Left lung (tissue), 14 donors: ENCODE measurements at regions of chr1 and their contacts with region 1.

Region 1: DNA sequence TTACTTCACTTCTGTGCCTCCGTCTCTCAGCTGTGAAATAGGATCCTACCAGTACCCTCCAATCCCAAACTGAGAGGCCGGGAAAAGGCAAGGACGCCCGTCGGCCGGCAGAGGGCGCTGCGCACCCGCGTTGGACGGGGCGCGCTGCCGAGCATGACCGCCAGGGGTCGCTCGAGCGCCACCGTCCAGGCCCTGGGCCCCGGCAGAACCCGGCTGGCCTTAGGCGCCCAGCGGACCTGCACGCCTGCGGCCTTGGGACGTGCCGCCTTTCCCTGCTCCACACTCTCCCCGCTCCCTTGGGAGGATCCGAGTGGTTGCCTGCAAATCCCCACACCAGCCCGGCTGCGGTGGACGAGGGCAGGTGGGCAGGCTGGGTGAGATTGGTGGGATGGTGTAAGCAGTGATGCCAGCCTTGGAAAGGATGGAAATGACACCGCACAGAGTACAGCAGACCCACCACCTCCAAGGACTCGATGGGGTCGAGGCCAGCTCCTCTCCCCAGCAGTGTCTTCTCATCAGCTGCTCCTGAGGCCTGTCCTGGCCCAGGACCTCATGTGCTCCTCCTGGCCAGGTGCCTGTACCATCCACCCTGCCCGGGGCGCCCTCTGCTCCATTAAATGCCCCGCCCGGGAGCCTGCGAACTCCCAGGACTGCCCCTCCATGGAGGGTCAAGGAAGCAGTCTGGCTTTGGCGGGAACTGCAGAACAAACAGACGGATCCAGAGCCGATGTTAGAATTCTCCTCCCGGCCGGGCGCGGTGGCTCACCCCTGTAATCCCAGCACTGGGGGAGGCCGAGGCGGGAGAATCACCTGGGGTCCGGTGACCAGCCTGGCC is 47.4 kb upstream of the LBR start:
- DNase-seq: peak; percentile 70 to 97 (median 82)
- ATAC-seq: peak; percentile 100
- H3K4me3 ChIP-seq: no peak overlapping the region
- H3K27ac ChIP-seq: no peak overlapping the region
- H3K4me1 ChIP-seq: peaks cover 0 to 10% of the 10 kb centered on the region in 2 donors
- H3K27me3 ChIP-seq: no peaks in the 10 kb centered on the region
- CTCF ChIP-seq: peak; percentile 100

Region 2: GRCh38 chr1:225406976-225407725 is 68.1 kb before region 1 on chr1:
- intact Hi-C with region 1: no loop called
- DNase-seq: no peak
- ATAC-seq: no peak
- H3K4me3 ChIP-seq: no peak overlapping the region
- H3K27ac ChIP-seq: no peak overlapping the region
- H3K4me1 ChIP-seq: no peaks in the 10 kb centered on the region
- H3K27me3 ChIP-seq: no peaks in the 10 kb centered on the region
- CTCF ChIP-seq: no peak

Region 3: DNA sequence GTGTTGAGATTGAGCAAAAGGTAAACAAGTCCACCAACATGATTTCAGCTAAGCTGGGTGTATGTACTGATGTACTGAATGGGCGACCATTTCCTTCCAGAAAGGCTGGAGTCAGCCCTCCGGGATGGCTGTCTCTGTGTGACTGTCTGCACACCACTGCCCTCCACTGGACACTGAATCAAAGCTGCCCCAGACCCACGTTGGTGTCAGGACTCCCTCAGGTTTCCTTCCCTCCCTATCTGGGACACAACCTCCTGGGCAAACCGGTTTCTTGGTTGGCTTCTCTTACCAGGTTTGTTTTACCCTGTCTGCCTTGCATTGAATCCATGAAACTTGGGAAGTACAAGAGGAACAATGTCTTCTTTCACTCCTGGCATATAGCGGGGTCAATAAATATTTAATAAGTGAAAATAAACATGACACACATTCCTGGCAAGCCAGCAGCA is 297.1 kb after region 1 on chr1:
- intact Hi-C with region 1: loop called in 1 of 2 experiments (anchors 5 kb)
- DNase-seq: peak in 3 of 4 donors; percentile 81 to 94 (median 85)
- ATAC-seq: peak; percentile 97
- H3K4me3 ChIP-seq: no peak overlapping the region
- H3K27ac ChIP-seq: peak overlapping the region; percentile 51 to 75
- H3K4me1 ChIP-seq: peaks cover 12 to 38% of the 10 kb centered on the region in 2 donors
- H3K27me3 ChIP-seq: no peaks in the 10 kb centered on the region
- CTCF ChIP-seq: peak; percentile 78

Region 4: GRCh38 chr1:225845571-225846259 is 370.5 kb after region 1 on chr1:
- intact Hi-C with region 1: loop called in 1 of 2 experiments (anchors 10 kb)
- DNase-seq: peak; percentile 59 to 85 (median 78)
- ATAC-seq: peak; percentile 77
- H3K4me3 ChIP-seq: no peak overlapping the region
- H3K27ac ChIP-seq: no peak overlapping the region
- H3K4me1 ChIP-seq: peaks cover 0 to 19% of the 10 kb centered on the region in 2 donors
- H3K27me3 ChIP-seq: no peaks in the 10 kb centered on the region
- CTCF ChIP-seq: peak; percentile 53 to 55

Region 5: DNA sequence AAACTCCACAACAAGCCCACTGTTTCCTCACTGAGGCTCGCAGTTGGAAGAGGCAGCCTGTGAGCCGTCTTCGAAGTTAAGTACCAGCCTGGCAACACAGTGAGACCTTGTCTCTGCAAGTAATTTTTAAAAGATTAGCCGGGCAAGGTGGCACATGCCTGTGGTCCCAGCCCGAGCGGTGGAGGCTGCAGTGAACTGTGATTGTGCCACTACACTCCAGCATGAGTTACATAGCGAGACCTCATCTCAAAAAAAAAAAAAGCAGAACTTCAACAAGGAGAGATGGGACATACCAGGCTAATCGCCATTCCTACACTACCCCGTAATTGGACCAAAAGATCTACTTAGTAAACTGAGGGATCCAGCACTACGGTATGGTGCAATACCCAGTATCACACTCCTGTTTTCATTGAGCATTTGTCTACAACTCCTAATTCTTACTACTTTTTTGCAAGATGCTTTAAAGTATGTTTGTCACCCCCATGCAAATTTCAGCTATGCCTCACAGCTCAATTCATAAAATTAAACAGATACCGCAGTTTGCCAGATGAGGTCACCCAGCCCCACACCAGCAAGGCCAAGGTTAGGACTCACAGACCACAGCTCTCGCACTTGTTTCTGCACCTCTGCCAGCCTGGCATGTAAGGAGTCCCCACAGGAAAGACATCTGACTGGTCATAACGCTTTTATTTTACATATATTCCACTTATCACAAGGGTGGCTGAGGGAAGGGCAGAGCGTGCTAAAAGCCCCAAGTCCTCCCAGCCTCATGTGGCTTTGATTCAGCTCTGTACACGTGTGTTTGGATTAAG is 502.9 kb after region 1 on chr1:
- intact Hi-C with region 1: loop called in 1 of 2 experiments (anchors 5 kb)
- DNase-seq: peak in 1 of 4 donors; percentile 9
- ATAC-seq: no peak
- H3K4me3 ChIP-seq: no peak overlapping the region
- H3K27ac ChIP-seq: no peak overlapping the region
- H3K4me1 ChIP-seq: no peaks in the 10 kb centered on the region
- H3K27me3 ChIP-seq: no peaks in the 10 kb centered on the region
- CTCF ChIP-seq: no peak